ENCODE measurements at regions of chr15 and their contacts with region 1.

Region 1: GRCh38 chr15:36601497-36601932 is 22.1 kb downstream of the CDIN1 start:
- DNase-seq: peak; percentile 91
- H3K4me3 ChIP-seq: peak overlapping the region; percentile 2 to 18 (median 6)
- H3K27ac ChIP-seq: peak overlapping the region; percentile 79 to 90 (median 86)
- H3K4me1 ChIP-seq: peaks cover 0 to 89% (median 61%) of the 10 kb centered on the region in 4 donors
- H3K27me3 ChIP-seq: no peaks in the 10 kb centered on the region
- CTCF ChIP-seq: no peak
- EP300 ChIP-seq: peak; percentile 54 to 90 (median 75)
- POLR2A ChIP-seq: no peak

Region 2: DNA sequence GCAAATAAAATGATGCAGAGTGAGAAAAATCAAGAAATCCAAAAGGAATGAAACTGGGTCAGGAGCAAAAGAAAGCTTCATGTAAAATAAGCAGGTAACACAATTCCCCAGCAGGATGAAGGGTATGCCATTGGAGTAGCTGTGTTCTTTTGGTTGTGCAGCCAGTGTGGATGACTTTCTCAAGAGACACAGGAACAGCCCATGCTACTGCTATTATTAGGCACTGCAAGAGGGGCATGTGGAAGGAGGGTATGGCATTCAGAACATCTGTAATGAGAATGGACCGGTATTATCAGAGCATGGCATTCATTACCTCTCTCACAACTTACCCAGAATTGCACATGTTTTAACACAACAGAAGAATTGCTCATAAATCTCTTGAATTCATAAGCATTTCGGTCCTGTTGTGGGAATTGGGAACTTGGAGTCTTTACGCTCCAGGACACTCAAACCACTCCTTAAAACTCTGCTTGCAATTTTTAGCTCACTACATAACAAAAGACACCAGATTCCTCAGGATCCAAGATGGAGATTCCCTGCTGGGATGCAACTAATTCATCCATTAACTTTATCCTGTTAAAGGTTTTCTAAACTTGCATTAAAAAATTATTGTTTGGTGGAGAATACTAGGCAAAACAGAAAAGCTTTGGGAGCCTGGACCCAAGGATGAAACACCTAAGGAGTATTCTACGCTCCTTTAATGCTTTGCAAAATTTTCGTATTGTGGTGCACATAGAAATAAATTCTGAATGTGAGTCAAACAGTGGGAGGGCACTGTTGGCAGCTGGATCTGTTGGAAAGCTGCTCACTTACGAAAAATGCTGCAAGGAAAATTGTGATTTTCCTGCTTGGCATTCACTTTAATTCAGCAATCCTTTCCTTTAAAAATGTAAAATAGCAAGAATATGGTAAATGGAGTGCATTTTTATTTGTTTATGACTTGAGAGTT is 56.7 kb before region 1 on chr15:
- intact Hi-C with region 1: no loop called
- DNase-seq: no peak
- H3K4me3 ChIP-seq: no peak overlapping the region
- H3K27ac ChIP-seq: no peak overlapping the region
- H3K4me1 ChIP-seq: no peaks in the 10 kb centered on the region
- H3K27me3 ChIP-seq: no peaks in the 10 kb centered on the region
- CTCF ChIP-seq: no peak
- EP300 ChIP-seq: no peak
- POLR2A ChIP-seq: no peak

Region 3: DNA sequence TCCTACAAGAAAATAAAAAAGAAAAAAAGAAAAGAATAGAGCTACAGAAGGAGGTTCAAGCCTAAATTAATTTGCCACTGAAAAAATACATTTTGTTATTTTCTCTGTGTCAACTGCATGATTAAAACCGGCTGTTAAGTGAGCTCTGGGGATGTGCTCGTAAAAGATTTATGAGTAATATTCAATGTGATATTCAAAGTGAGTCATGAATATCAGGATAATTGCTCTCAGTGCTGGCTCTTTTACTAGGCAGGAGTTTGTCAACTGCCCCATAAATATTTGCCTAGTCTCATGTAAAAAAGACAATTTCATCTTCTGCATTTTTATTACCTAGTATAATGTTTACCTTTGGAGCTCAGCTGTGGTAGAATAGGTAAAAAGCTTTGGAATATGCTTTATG is 56.8 kb after region 1 on chr15:
- intact Hi-C with region 1: loop called (anchors 5 kb)
- DNase-seq: no peak
- H3K4me3 ChIP-seq: no peak overlapping the region
- H3K27ac ChIP-seq: no peak overlapping the region
- H3K4me1 ChIP-seq: peaks cover 0 to 32% (median 12%) of the 10 kb centered on the region in 4 donors
- H3K27me3 ChIP-seq: no peaks in the 10 kb centered on the region
- CTCF ChIP-seq: no peak
- EP300 ChIP-seq: peak in 1 of 4 donors; percentile 23
- POLR2A ChIP-seq: no peak

Region 4: GRCh38 chr15:36810656-36811449 is 209.3 kb after region 1 on chr15:
- intact Hi-C with region 1: loop called (anchors 5 kb)
- DNase-seq: no peak
- H3K4me3 ChIP-seq: no peak overlapping the region
- H3K27ac ChIP-seq: peak overlapping the region; percentile 65 to 76 (median 72)
- H3K4me1 ChIP-seq: peaks cover 0 to 83% (median 65%) of the 10 kb centered on the region in 4 donors
- H3K27me3 ChIP-seq: no peaks in the 10 kb centered on the region
- CTCF ChIP-seq: peak in 2 of 4 experiments; percentile 37 to 44
- EP300 ChIP-seq: peak in 1 of 4 donors; percentile 54
- POLR2A ChIP-seq: no peak

Region 5: DNA sequence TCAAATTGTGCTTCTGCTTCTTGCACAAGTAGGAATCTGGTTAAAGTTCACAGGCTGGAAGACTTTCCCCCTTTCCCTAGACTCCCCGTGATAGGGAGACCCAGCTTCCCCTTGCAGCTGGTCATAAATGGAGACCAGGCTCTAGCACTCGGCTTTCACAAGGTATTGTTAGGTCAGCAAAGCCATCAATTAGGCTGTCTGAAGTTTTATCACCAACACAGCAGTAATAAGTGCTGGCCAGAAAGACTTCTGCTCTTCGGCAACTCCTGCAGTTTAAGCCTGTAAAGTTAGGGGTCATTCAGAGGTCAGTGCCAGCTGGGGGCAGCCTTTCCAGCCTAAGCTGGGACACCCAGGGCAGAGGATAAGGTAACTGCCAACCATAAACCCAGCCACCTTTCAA is 295.4 kb after region 1 on chr15:
- intact Hi-C with region 1: no loop called
- DNase-seq: no peak
- H3K4me3 ChIP-seq: no peak overlapping the region
- H3K27ac ChIP-seq: peak overlapping the region in 3 of 4 donors; percentile 60 to 73 (median 67)
- H3K4me1 ChIP-seq: peaks cover 0 to 67% (median 51%) of the 10 kb centered on the region in 4 donors
- H3K27me3 ChIP-seq: no peaks in the 10 kb centered on the region
- CTCF ChIP-seq: no peak
- EP300 ChIP-seq: peak in 1 of 4 donors; percentile 10
- POLR2A ChIP-seq: no peak

Region 6: DNA sequence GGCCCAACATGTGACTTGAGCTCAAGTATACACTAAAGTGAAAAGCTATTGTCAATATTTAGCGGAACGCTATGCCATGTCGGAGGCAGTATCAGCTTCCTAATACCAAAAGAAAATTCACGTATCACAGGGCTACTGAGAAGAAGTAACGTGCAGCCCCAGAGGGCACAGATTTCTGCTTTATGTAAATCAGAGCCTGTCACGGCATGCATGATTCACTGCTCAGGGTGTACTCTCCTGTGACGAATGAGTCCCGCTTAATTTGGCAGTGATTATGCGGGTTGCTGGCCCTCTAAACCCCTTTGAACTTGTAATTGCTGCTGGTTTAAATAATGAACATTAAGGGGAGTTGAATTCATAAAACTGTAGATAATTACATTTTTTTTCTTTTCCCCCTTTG is 413.5 kb after region 1 on chr15:
- intact Hi-C with region 1: loop called (anchors 10 kb)
- DNase-seq: no peak
- H3K4me3 ChIP-seq: no peak overlapping the region
- H3K27ac ChIP-seq: peak overlapping the region; percentile 72 to 83 (median 81)
- H3K4me1 ChIP-seq: peaks cover 0 to 69% (median 51%) of the 10 kb centered on the region in 4 donors
- H3K27me3 ChIP-seq: no peaks in the 10 kb centered on the region
- CTCF ChIP-seq: no peak
- EP300 ChIP-seq: no peak
- POLR2A ChIP-seq: no peak

Region 7: GRCh38 chr15:37100109-37100965 is 498.8 kb after region 1 on chr15 and contains the start of gene MEIS2:
- intact Hi-C with region 1: loop called (anchors 5 kb)
- DNase-seq: peak; percentile 98
- H3K4me3 ChIP-seq: peak within 1 kb of the TSS; percentile 83 to 87 (median 84)
- H3K27ac ChIP-seq: peak within 1 kb of the TSS; percentile 95 to 97 (median 96)
- H3K4me1 ChIP-seq: no peaks in the 10 kb centered on the region
- H3K27me3 ChIP-seq: no peaks in the 10 kb centered on the region
- CTCF ChIP-seq: no peak
- EP300 ChIP-seq: peak in 1 of 4 donors; percentile 30
- POLR2A ChIP-seq: peak; percentile 50 to 69
- total RNA-seq, gene MEIS2: 76.0 to 154 (median 85.1) TPM